ENCODE measurements at regions of chr7 and their contacts with region 1.

Region 1: GRCh38 chr7:117152213-117153007 is 170.4 kb downstream of the WNT2 start:
- H3K4me3 Mint-ChIP-seq: no peak overlapping the region
- H3K27ac Mint-ChIP-seq: no peak overlapping the region
- H3K4me1 Mint-ChIP-seq: peaks cover 10% of the 10 kb centered on the region
- H3K27me3 Mint-ChIP-seq: no peaks in the 10 kb centered on the region

Region 2: DNA sequence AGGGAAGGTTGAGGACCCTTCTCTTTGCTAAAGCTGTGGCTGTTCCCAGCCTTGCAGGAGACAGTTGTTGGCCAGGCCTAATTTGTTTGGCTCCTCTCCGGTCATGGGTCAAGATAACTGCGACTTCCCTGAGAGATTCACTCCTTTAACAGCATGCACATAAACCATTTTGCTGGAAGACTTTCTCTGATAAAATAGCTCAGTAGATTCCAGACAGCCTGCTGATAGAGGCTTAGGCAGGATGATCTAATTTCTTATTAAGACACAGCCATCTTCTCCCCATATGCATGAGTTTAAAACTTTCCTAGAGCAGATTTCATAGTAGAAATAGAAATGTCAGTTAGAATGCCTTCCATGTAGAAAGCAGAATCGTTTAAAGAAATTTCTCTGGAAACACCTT is 11.5 kb before region 1 on chr7:
- intact Hi-C with region 1: loop called (anchors 1 kb)
- H3K4me3 Mint-ChIP-seq: no peak overlapping the region
- H3K27ac Mint-ChIP-seq: no peak overlapping the region
- H3K4me1 Mint-ChIP-seq: peaks cover 33% of the 10 kb centered on the region
- H3K27me3 Mint-ChIP-seq: no peaks in the 10 kb centered on the region

Region 3: GRCh38 chr7:117237646-117238045 is 85.2 kb after region 1 on chr7:
- intact Hi-C with region 1: no loop called
- H3K4me3 Mint-ChIP-seq: no peak overlapping the region
- H3K27ac Mint-ChIP-seq: no peak overlapping the region
- H3K4me1 Mint-ChIP-seq: peaks cover 7% of the 10 kb centered on the region
- H3K27me3 Mint-ChIP-seq: peaks cover 4% of the 10 kb centered on the region